B cell (primary cell): ENCODE measurements at regions of chr18 and their contacts with region 1.

Region 1: DNA sequence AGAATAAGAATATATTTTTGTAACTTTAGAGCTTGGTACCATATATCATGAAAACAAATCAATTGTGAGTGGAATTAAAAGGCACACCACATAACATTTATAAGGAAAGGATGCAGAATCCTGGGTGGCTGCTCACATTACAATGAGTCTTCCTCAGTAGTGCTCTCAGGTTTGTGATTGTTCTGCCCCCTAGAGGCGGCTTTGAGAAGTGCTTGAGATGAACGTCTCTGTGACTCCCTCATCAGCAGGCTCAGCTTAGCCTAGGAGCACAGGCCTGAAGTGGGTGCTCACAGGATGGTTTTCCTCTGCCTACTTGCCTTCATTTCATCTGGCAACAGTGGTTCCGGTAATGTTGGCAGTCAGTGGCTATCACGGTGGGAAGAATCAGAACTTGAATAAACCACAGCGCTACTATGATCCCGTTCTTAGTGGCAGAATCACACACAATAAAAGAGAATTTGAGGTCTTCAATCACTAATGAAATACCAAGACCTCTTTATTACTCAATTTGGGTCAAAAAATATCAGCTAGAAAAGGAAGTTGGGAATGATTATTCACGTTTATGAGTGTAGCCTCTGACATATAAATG is 38.1 kb upstream of the B4GALT6 start:
- DNase-seq: peak; percentile 71
- ATAC-seq: peak; percentile 89
- H3K4me3 ChIP-seq: no peak overlapping the region
- H3K4me3 Mint-ChIP-seq: no peak overlapping the region
- H3K27ac ChIP-seq: no peak overlapping the region
- H3K27ac Mint-ChIP-seq: no peak overlapping the region
- H3K4me1 ChIP-seq: peaks cover 0 to 5% of the 10 kb centered on the region in 2 donors
- H3K4me1 Mint-ChIP-seq: peaks cover 2% of the 10 kb centered on the region
- H3K27me3 ChIP-seq: peaks cover 0 to 14% (median 13%) of the 10 kb centered on the region in 4 experiments
- H3K27me3 Mint-ChIP-seq: peaks cover 26% of the 10 kb centered on the region
- CTCF ChIP-seq: peak; percentile 95

Region 2: DNA sequence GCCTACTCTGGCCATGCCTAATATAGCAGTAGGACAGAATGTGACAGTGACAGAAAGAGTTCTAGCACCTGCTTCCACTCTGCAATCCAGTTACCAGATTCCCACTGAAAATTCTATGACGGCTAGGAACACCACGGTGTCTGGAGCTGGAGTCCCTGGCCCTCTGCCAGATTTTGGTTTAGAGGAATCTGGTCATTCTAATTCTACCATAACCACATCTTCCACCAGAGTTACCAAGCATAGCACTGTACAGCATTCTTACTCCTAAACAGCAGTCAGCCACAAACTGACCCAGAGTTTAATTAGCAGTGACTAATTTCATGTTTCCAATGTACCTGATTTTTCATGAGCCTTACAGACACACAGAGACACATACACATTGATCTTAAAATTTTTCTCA is 176.0 kb before region 1 on chr18:
- CTCF ChIA-PET with region 1: interaction called, 86 read pairs
- POLR2A ChIA-PET with region 1: no interaction called
- intact Hi-C with region 1: no loop called
- DNase-seq: no peak
- ATAC-seq: no peak
- H3K4me3 ChIP-seq: no peak overlapping the region
- H3K4me3 Mint-ChIP-seq: no peak overlapping the region
- H3K27ac ChIP-seq: no peak overlapping the region
- H3K27ac Mint-ChIP-seq: no peak overlapping the region
- H3K4me1 ChIP-seq: no peaks in the 10 kb centered on the region
- H3K4me1 Mint-ChIP-seq: no peaks in the 10 kb centered on the region
- H3K27me3 ChIP-seq: no peaks in the 10 kb centered on the region
- H3K27me3 Mint-ChIP-seq: no peaks in the 10 kb centered on the region
- CTCF ChIP-seq: no peak

Region 3: GRCh38 chr18:31555971-31556747 is 166.3 kb before region 1 on chr18:
- CTCF ChIA-PET with region 1: interaction called, 86 read pairs
- POLR2A ChIA-PET with region 1: no interaction called
- intact Hi-C with region 1: no loop called
- DNase-seq: peak; percentile 66
- ATAC-seq: peak; percentile 39
- H3K4me3 ChIP-seq: no peak overlapping the region
- H3K4me3 Mint-ChIP-seq: no peak overlapping the region
- H3K27ac ChIP-seq: no peak overlapping the region
- H3K27ac Mint-ChIP-seq: no peak overlapping the region
- H3K4me1 ChIP-seq: no peaks in the 10 kb centered on the region
- H3K4me1 Mint-ChIP-seq: no peaks in the 10 kb centered on the region
- H3K27me3 ChIP-seq: peaks cover 0 to 2% (median 0%) of the 10 kb centered on the region in 4 experiments
- H3K27me3 Mint-ChIP-seq: peaks cover 8% of the 10 kb centered on the region
- CTCF ChIP-seq: peak; percentile 98

Region 4: GRCh38 chr18:31741097-31741735 is 18.8 kb after region 1 on chr18:
- CTCF ChIA-PET with region 1: interaction called, 15 read pairs
- POLR2A ChIA-PET with region 1: no interaction called
- intact Hi-C with region 1: no loop called
- DNase-seq: peak; percentile 61
- ATAC-seq: no peak
- H3K4me3 ChIP-seq: no peak overlapping the region
- H3K4me3 Mint-ChIP-seq: no peak overlapping the region
- H3K27ac ChIP-seq: no peak overlapping the region
- H3K27ac Mint-ChIP-seq: no peak overlapping the region
- H3K4me1 ChIP-seq: no peaks in the 10 kb centered on the region
- H3K4me1 Mint-ChIP-seq: no peaks in the 10 kb centered on the region
- H3K27me3 ChIP-seq: no peaks in the 10 kb centered on the region
- H3K27me3 Mint-ChIP-seq: no peaks in the 10 kb centered on the region
- CTCF ChIP-seq: peak; percentile 95

Region 5: GRCh38 chr18:31789409-31790055 is 67.1 kb after region 1 on chr18:
- CTCF ChIA-PET with region 1: no interaction called
- POLR2A ChIA-PET with region 1: no interaction called
- intact Hi-C with region 1: no loop called
- DNase-seq: no peak
- ATAC-seq: no peak
- H3K4me3 ChIP-seq: no peak overlapping the region
- H3K4me3 Mint-ChIP-seq: no peak overlapping the region
- H3K27ac ChIP-seq: no peak overlapping the region
- H3K27ac Mint-ChIP-seq: no peak overlapping the region
- H3K4me1 ChIP-seq: peaks cover 4 to 5% of the 10 kb centered on the region in 2 donors
- H3K4me1 Mint-ChIP-seq: peaks cover 10% of the 10 kb centered on the region
- H3K27me3 ChIP-seq: no peaks in the 10 kb centered on the region
- H3K27me3 Mint-ChIP-seq: no peaks in the 10 kb centered on the region
- CTCF ChIP-seq: no peak